Left colon (tissue), 2 donors: ENCODE measurements at regions of chr2 and their contacts with region 1.

Region 1: DNA sequence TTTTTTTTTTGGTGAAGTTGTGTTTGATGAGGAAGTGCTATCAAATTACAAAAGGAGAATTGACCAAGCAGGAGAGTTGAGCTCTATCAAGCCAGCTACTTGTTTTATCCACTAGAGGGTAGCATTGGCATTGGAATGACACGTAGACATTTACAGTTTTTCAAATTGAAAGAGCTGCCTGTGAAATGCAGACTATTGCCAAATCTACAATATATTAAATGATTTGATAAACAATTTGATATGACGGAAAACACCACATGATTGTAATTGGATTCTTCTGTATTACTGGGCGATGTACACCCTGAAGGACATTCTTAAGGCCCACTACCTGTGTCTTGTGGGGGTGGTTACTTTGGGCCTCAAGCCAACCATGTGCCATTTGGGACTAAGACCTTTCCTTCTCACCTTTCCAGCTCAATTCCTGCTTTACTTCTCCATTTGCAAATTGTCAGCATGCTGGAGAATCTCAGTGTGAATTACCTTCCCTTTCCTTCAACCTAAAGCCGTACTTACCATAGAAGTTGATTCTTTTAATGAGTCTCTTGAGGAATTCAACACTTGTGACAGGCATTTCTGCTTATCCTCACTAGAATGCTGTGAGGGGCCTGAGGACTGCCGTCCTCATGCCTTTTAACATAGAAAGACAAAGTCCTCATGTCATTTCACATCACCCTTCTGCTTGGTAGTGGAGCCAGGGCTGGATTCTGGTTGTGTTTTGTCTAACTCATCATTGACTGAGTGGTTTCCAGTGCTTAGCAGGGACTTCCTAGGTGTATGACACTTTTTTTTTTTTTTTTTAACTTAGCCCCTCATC is 134.8 kb upstream of the THUMPD2 start:
- DNase-seq: no peak
- ATAC-seq: peak; percentile 58

Region 2: DNA sequence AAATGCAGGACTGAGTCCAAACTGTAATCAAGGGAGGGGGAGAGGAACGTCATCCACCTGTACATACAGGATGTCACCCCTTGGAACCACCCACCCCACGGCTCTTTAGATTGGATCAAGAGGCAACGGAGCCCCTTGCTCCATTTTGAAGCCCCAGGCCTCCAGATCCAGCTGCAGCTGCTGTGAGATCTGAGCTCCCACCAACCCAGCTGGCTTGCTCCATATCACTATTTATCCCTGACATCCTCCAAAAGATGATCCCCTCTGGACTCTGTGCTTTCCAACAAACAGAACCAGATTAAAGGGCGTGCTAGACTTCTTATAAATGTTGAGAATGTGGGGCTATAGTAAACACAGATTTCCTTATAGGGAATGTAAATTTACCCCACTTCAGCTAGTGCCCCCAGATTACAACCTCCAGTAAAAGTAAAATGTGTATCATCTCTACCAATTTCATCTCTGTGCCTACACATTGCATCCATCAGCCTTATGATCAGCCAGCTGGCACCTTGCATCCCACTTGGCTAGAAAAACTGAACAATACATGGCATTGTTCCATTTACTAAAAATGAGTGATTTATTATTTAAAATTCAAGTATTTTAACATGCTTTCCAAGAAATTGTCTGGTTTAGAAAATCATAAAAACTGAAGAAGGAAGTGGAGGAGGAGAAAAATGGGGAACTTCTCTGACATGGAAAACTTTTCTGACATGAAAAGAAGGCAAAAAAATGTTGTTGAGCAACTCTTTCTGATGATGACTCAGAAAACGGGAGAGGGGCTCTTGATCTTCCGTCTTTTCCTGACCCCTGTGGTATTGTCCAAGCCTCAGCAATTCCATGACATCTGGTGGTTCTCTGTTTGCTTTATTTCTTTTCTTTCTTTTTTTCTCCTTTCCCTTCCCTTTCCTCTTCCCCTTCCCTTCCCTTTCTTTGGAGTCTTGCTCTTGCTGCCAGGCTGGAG is 127.8 kb after region 1 on chr2:
- intact Hi-C with region 1: no loop called
- DNase-seq: no peak
- ATAC-seq: no peak

Region 3: GRCh38 chr2:40554668-40555285 is 640.9 kb after region 1 on chr2:
- intact Hi-C with region 1: loop called in 1 of 2 experiments (anchors 5 kb)
- DNase-seq: peak; percentile 33 to 67
- ATAC-seq: peak; percentile 59

Region 4: DNA sequence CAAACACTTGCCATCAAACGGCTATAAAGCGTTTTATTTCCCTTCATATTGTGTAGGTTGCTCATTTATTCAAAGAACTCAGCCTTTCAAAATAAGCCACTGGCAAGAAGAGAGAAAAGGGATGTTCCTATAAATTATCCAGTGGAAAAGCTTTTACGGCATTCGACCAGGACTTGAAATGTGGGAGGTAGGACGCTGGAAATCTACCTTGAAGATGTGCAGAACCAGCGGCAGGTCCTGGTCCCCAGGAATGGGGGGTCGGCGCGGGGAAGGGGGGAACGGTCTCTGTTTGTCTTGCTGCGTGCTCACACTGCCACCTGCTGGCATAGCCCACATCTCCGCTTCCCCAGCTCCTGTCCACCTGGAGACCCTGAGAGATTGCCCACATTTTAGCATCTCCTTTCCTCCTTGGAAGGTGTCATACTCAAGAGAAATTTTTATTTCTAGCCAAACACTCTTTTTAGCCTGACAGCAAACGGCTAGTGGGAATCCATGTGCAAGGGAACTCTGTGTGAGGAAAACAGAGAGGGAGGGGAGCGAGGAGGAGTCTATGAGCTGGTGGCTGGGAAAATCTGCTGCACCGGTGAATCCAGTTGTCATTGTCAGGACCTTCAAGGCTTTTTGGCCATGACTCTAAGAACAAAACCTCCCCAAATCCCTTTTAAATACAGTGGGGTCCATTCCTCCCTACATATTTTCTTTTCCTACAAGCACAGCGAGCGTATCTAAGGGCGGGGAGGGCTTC is 1785.0 kb after region 1 on chr2:
- intact Hi-C with region 1: loop called in 1 of 2 experiments (anchors 5 kb)
- DNase-seq: peak in 1 of 2 donors; percentile 29
- ATAC-seq: no peak

Region 5: GRCh38 chr2:41782306-41783158 is 1868.7 kb after region 1 on chr2:
- intact Hi-C with region 1: loop called in 1 of 2 experiments (anchors 10 kb)
- DNase-seq: no peak
- ATAC-seq: peak; percentile 37